ENCODE measurements at regions of chr6 and their contacts with region 1.

Region 1: DNA sequence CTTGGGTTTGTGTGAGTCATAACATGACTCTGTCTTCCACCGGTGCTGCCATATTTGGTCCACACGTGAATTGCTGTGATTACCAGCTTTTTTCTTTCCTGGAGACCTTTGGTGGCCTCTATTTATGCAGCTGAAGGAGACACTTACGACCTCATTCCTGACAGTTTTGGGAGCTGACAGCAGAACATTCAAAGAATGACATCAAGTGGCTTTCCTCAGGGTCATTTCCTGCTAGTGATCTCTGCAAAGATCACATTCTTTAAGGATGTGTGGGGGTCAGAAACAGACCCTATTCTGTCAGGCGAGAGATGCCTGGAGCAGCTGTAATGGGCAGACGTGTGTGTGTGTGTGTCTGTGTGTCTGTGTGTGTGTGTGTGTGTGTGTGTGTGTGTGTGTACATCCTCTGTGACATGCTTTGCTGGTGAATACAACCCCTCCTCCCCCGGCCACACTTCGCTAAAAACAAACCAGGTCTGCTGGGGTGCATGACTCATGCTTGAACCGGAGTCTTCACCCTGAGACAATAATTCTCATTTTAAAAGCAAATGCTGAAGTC is 115.6 kb downstream of the TMEM170B start:
- DNase-seq: peak; percentile 55 to 69
- H3K4me3 ChIP-seq: no peak overlapping the region
- H3K27ac ChIP-seq: peak overlapping the region; percentile 15; the same call in 1 of the 2 replicates
- H3K4me1 ChIP-seq: peaks cover 48% of the 10 kb centered on the region
- H3K27me3 ChIP-seq: no peaks in the 10 kb centered on the region
- CTCF ChIP-seq: no peak

Region 2: DNA sequence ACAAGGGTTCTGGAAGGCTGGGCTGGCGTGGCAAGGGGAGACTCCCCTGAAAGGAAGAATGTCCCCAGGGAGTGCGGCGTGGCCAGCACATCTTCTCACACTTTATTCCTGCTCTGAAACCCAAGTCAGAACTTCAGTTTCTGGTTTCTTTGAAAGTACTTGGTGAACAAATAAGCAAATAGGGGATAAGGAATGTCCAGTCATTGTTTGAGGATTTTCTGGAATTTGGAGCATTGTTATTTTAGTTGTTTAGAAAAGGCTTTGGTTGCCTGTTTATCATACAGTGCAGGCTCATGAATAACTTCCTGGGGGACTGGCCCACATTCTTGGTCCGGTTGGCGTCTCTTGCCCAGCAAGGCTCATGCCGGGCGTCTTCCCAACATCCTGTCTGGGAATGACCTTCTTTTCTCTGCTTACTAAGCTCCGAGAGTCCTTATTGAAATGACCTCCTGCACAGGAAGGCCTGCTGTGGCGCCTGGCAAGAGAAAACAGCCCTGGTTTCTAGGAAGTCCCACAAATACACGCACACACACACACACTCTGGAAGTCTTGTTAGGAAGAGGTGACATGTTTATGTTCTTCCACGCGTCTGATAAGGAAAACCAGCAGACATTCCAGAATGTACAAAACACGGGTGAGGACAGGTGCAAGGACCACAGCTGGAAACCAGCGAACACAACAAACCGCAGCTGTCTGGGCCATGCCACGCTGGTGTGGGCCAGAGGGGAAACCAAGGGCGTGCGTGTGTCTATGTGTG is 43.6 kb before region 1 on chr6:
- CTCF ChIA-PET with region 1: interaction called, 3 read pairs
- POLR2A ChIA-PET with region 1: interaction called, 10 read pairs
- intact Hi-C with region 1: loop called (anchors 1 kb)
- DNase-seq: peak; percentile 77 to 80
- H3K4me3 ChIP-seq: no peak overlapping the region
- H3K27ac ChIP-seq: no peak overlapping the region
- H3K4me1 ChIP-seq: peaks cover 24% of the 10 kb centered on the region
- H3K27me3 ChIP-seq: no peaks in the 10 kb centered on the region
- CTCF ChIP-seq: no peak

Region 3: DNA sequence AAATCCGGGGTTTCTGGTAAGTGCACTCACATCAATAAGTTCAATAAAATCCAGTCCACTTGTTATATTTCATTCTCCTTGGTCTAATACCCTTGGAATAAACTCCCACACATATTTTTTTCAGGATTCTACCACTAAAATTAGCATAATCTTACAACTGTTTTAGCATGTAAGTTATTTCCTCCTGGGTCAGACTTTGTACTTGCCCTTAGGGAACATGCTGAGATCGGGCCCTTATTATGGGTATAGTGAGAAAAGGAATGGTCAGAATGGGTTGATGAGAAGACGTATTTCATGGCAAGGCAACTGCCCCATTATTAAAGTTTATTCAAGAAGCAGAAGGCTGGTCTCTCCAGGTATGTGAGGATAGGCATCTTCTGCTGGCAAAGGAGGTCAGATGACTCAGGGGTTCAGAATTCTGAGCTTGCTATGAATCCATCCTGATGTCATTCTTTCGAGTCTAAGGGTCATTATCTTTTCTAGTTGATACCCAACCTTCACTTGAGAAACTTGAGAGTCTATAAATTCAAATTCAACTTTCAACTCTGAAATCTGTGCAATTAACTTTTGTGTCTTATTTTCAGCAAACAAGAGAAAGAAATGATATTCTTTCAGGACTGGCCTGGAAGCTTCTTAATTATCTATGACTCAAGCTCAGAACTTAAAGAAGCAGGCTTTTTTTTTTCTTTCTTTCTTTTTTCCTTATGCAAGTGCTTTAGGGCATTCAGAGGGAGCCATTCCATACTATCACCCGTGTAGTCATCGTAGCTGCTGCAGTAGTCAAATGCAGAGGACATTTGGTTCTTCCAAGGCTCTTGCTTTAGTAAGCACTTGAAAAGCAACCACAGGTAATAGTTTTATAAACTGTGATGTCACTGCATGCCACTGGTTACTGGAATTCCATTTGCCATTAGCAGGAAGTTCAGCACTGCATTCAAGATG is 32.3 kb after region 1 on chr6:
- CTCF ChIA-PET with region 1: no interaction called
- POLR2A ChIA-PET with region 1: no interaction called
- intact Hi-C with region 1: loop called (anchors 1 kb)
- DNase-seq: peak; percentile 63 to 98
- H3K4me3 ChIP-seq: peak overlapping the region; percentile 34; the same call in 1 of the 2 replicates
- H3K27ac ChIP-seq: peak overlapping the region; percentile 87
- H3K4me1 ChIP-seq: peaks cover 30% of the 10 kb centered on the region
- H3K27me3 ChIP-seq: no peaks in the 10 kb centered on the region
- CTCF ChIP-seq: no peak

Region 4: GRCh38 chr6:12150812-12151432 is 497.8 kb after region 1 on chr6:
- CTCF ChIA-PET with region 1: no interaction called
- POLR2A ChIA-PET with region 1: no interaction called
- intact Hi-C with region 1: loop called (anchors 5 kb)
- DNase-seq: peak in 1 of 2 experiments; percentile 47
- H3K4me3 ChIP-seq: no peak overlapping the region
- H3K27ac ChIP-seq: no peak overlapping the region; the same call in 1 of the 2 replicates
- H3K4me1 ChIP-seq: peaks cover 30% of the 10 kb centered on the region
- H3K27me3 ChIP-seq: no peaks in the 10 kb centered on the region
- CTCF ChIP-seq: peak; percentile 81

Region 5: DNA sequence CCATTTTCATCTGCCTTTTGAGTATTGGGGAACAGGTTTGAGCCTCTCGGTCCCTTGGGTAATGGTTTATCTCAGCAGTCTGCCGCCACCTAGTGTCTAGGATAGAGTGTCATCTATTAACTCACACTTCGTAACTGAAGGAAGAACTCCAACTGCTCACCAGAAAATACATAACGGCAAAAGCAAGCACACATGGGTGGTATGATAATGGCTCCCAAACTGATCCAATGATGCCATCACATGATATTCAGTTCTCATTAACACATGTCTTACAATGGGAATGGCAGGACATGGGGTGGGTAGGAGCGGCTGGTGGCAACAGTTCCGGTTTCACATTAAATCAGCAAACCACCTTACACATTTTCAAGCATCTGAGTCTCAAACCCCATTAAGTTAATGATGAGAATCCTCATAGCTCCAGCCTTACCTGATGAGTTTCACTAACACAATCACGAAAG is 952.8 kb after region 1 on chr6:
- CTCF ChIA-PET with region 1: interaction called, 3 read pairs
- POLR2A ChIA-PET with region 1: no interaction called
- intact Hi-C with region 1: loop called (anchors 1 kb)
- DNase-seq: peak; percentile 53 to 79
- H3K4me3 ChIP-seq: no peak overlapping the region
- H3K27ac ChIP-seq: no peak overlapping the region
- H3K4me1 ChIP-seq: peaks cover 16% of the 10 kb centered on the region
- H3K27me3 ChIP-seq: no peaks in the 10 kb centered on the region
- CTCF ChIP-seq: peak; percentile 98

Measured in PC-9 (cell line).